ENCODE measurements at regions of chr15 and their contacts with region 1.

Region 1: GRCh38 chr15:83207622-83208411 is at the start of gene HDGFL3:
- DNase-seq: peak; percentile 36
- H3K4me3 Mint-ChIP-seq: peak within 1 kb of the TSS; percentile 70
- H3K27ac Mint-ChIP-seq: peak within 1 kb of the TSS; percentile 47
- H3K4me1 Mint-ChIP-seq: peaks cover 3% of the 10 kb centered on the region
- H3K27me3 Mint-ChIP-seq: peaks cover 25% of the 10 kb centered on the region
- total RNA-seq, gene HDGFL3: 5.9 to 8.1 TPM

Region 2: GRCh38 chr15:81939604-81940440 is 1268.0 kb before region 1 on chr15:
- CTCF ChIA-PET with region 1: no interaction called
- intact Hi-C with region 1: no loop called
- DNase-seq: peak; percentile 48
- H3K4me3 Mint-ChIP-seq: no peak overlapping the region
- H3K27ac Mint-ChIP-seq: no peak overlapping the region
- H3K4me1 Mint-ChIP-seq: no peaks in the 10 kb centered on the region
- H3K27me3 Mint-ChIP-seq: peaks cover 6% of the 10 kb centered on the region

Region 3: DNA sequence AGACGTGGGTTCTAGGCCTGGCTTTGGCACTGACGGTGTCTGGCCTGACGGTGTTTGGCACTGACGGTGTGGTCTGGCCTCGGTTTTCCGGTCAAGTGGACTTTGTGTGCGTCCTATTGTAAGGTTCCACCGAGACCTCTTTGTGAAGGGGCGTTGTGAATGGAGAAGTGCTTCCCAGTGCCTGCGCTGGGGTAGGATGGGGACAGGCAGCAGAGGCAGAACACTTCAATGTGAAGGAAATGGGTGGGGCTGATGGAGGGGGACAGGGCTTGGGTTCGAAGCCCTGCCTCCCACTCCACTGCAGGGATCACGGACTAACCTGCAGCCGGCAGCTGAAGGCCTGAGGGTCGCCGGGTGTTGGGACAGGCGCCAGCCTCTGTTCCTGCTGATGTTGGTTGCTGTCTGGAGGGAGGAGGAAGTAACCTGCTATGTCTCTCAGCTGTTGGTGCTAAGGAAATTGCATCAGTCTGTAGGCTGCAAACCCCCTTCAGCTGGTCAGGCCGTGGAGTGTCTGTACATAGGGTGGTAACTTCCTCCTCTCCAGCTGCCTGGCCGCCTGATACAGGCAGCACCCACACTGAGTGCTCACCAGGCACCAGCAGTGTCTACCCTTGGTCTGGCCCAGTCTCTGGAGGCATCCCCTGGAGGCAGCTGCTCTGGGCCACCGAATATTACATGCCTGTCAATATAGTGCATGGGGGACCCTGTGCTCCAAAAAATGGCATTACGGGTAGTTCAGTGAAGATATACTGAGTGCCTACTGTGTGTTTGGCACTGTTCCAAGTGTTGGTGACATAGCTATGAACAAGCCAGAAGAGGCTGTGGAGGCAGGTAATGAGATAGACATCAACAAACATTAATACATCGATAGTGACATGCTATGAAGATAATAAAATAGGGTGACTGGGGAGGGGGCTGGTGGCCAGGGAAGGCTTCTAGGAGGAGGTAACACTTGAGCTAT is 99.3 kb before region 1 on chr15:
- CTCF ChIA-PET with region 1: no interaction called
- intact Hi-C with region 1: loop called (anchors 5 kb)
- DNase-seq: peak; percentile 39
- H3K4me3 Mint-ChIP-seq: peak overlapping the region; percentile 81
- H3K27ac Mint-ChIP-seq: no peak overlapping the region
- H3K4me1 Mint-ChIP-seq: peaks cover 16% of the 10 kb centered on the region
- H3K27me3 Mint-ChIP-seq: peaks cover 58% of the 10 kb centered on the region

Region 4: GRCh38 chr15:83164111-83164770 is 43.6 kb before region 1 on chr15:
- CTCF ChIA-PET with region 1: no interaction called
- intact Hi-C with region 1: loop called (anchors 2 kb)
- DNase-seq: no peak
- H3K4me3 Mint-ChIP-seq: no peak overlapping the region
- H3K27ac Mint-ChIP-seq: no peak overlapping the region
- H3K4me1 Mint-ChIP-seq: peaks cover 14% of the 10 kb centered on the region
- H3K27me3 Mint-ChIP-seq: peaks cover 29% of the 10 kb centered on the region